ENCODE measurements at regions of chr6 and their contacts with region 1.

Region 1: DNA sequence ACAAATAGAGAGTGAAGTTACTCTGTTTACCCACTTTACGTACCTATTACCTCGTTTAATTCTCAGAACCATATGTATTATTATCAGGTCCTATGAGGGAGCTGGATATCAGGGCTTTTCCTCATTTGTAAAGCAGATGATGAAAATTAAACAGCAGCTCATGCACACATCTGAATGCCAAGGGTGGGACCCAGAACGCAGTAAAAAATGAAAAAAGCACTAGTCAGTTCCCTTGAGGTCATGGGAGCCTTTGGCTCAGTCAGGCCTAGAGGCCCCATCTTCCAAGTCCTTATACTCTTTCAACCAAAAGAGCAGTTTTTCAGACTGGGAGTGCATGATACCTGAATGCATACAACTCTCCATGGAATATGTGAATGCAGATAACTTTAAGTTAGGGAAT is 23.0 kb downstream of the B3GAT2 start:
- DNase-seq: no peak

Region 2: GRCh38 chr6:70863343-70863742 is 70.5 kb before region 1 on chr6:
- intact Hi-C with region 1: loop called in 1 of 2 experiments (anchors 2 kb)
- DNase-seq: no peak

Region 3: GRCh38 chr6:70903665-70904452 is 30.0 kb before region 1 on chr6:
- intact Hi-C with region 1: loop called in 1 of 2 experiments (anchors 2 kb)
- DNase-seq: no peak